Activated CD4-positive, alpha-beta memory T cell treated with anti-CD3 and anti-CD28 coated beads for 36 hours (primary cell): ENCODE measurements at regions of chr1 and their contacts with region 1.

Region 1: GRCh38 chr1:209627732-209628196 is 24.5 kb downstream of the LAMB3 start:
- DNase-seq: peak; percentile 88
- H3K4me3 Mint-ChIP-seq: no peak overlapping the region
- H3K27ac Mint-ChIP-seq: no peak overlapping the region
- H3K4me1 Mint-ChIP-seq: peaks cover 14% of the 10 kb centered on the region
- H3K27me3 Mint-ChIP-seq: no peaks in the 10 kb centered on the region

Region 2: DNA sequence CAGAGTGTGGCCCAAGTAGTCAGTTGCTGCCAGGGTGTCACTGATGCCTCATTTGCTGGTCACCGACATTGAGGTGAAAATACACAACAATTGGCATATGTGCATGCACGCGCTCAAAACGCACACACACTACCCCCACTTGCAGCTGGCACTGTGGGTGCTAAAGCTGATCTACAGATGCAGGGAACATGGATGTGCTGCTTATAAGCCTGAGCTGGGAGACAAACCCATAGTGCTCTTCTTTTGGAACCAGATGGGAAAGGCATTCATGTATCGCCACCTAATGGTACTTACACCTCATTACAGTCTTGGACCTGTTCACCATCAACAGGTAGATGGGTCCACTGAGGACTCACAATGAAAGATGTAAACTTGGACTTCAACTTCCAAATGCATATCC is 114.5 kb before region 1 on chr1:
- CTCF ChIA-PET with region 1: no interaction called
- POLR2A ChIA-PET with region 1: no interaction called
- intact Hi-C with region 1: no loop called
- DNase-seq: no peak
- H3K4me3 Mint-ChIP-seq: no peak overlapping the region
- H3K27ac Mint-ChIP-seq: no peak overlapping the region
- H3K4me1 Mint-ChIP-seq: no peaks in the 10 kb centered on the region
- H3K27me3 Mint-ChIP-seq: peaks cover 8% of the 10 kb centered on the region

Region 3: DNA sequence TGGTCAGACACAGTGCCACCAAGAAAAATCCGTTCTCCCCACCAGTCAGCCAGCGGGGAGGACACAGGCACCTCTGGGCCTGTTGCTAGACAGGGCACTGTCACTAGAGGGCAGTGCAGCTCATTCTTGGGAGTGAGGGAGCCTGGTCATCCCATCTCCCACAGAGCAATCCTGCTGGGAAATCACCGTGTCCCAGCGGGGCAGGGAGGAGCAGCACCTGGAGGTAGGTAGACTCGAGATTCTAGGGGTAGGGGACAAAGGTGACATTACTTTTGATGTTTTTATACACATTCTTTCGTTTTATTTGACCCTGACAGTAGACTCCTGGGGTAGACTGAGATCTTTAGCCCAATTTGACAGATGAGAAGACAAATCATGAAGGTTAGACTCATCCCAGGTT is 51.0 kb before region 1 on chr1:
- CTCF ChIA-PET with region 1: interaction called, 18 read pairs
- POLR2A ChIA-PET with region 1: no interaction called
- intact Hi-C with region 1: loop called (anchors 1 kb)
- DNase-seq: peak; percentile 82
- H3K4me3 Mint-ChIP-seq: no peak overlapping the region
- H3K27ac Mint-ChIP-seq: no peak overlapping the region
- H3K4me1 Mint-ChIP-seq: no peaks in the 10 kb centered on the region
- H3K27me3 Mint-ChIP-seq: peaks cover 2% of the 10 kb centered on the region

Region 4: DNA sequence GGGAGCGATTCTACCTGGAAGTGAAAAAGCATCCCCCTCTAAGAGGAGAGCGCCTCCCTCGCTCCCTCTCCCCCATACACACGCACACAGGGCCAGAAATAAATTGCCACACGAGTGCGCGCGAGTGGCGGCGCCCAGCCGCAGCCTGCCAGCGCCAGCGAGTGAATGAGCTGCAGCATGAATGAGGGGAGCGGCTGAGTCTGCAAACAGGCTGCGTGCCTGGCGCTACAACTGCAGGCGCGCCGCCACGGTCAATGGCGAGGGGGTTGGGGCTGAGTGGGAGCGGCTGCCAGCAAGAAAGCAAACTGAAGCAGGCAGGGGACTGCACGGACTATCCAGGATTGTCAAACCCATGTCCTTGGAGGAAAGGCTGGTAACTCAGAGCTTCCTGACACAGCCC is 42.1 kb before region 1 on chr1:
- CTCF ChIA-PET with region 1: interaction called, 5 read pairs
- POLR2A ChIA-PET with region 1: no interaction called
- intact Hi-C with region 1: loop called (anchors 5 kb)
- DNase-seq: no peak
- H3K4me3 Mint-ChIP-seq: no peak overlapping the region
- H3K27ac Mint-ChIP-seq: no peak overlapping the region
- H3K4me1 Mint-ChIP-seq: peaks cover 3% of the 10 kb centered on the region
- H3K27me3 Mint-ChIP-seq: peaks cover 8% of the 10 kb centered on the region

Region 5: DNA sequence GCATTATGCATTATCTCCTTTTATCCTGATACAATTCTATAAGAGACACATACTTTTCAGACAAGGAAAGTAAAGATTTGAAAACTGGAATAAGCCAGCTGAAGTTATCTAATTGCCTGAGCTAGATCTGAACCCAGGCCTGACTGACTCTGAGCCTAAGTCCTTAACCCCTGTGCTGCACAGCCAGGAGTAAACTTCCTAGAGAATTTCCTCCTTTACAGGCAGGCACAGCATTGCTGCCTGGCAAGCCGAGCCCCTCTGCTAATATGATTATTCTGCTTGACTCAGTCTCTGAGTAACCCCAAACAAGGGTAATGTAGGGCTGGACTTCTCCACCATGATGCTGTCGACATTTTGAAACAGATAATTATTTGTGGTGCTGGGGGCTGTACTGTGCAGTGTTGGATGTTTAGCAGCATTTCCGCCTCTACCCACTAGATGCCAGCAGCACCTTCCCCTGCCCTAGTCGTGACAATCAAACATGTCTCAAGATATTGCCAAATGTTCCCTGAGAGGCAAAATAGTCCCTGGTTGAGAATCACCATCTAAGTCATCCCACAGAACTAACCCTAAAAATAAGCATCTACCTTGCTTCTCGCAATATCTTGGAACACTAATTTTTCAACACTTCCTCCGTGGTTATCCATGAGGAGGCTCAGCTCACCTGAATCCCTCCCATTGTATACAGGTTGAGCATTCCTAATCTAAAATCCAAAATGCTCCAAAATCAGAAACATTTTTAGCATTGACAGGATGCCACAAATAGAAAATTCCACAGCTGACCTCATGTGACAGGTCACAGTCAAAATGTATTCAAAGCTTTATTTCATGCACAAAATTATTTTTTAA is 25.7 kb before region 1 on chr1:
- CTCF ChIA-PET with region 1: interaction called, 19 read pairs
- POLR2A ChIA-PET with region 1: no interaction called
- intact Hi-C with region 1: loop called (anchors 2 kb)
- DNase-seq: peak; percentile 67
- H3K4me3 Mint-ChIP-seq: no peak overlapping the region
- H3K27ac Mint-ChIP-seq: no peak overlapping the region
- H3K4me1 Mint-ChIP-seq: peaks cover 3% of the 10 kb centered on the region
- H3K27me3 Mint-ChIP-seq: peaks cover 3% of the 10 kb centered on the region

Region 6: GRCh38 chr1:209607102-209607794 is 20.5 kb before region 1 on chr1:
- CTCF ChIA-PET with region 1: interaction called, 19 read pairs
- POLR2A ChIA-PET with region 1: no interaction called
- intact Hi-C with region 1: loop called (anchors 2 kb)
- DNase-seq: peak; percentile 73
- H3K4me3 Mint-ChIP-seq: no peak overlapping the region
- H3K27ac Mint-ChIP-seq: no peak overlapping the region
- H3K4me1 Mint-ChIP-seq: peaks cover 3% of the 10 kb centered on the region
- H3K27me3 Mint-ChIP-seq: no peaks in the 10 kb centered on the region

Region 7: GRCh38 chr1:209643285-209644020 is 15.7 kb after region 1 on chr1:
- CTCF ChIA-PET with region 1: interaction called, 13 read pairs
- POLR2A ChIA-PET with region 1: no interaction called
- intact Hi-C with region 1: no loop called
- DNase-seq: no peak
- H3K4me3 Mint-ChIP-seq: no peak overlapping the region
- H3K27ac Mint-ChIP-seq: no peak overlapping the region
- H3K4me1 Mint-ChIP-seq: peaks cover 8% of the 10 kb centered on the region
- H3K27me3 Mint-ChIP-seq: no peaks in the 10 kb centered on the region

Region 8: DNA sequence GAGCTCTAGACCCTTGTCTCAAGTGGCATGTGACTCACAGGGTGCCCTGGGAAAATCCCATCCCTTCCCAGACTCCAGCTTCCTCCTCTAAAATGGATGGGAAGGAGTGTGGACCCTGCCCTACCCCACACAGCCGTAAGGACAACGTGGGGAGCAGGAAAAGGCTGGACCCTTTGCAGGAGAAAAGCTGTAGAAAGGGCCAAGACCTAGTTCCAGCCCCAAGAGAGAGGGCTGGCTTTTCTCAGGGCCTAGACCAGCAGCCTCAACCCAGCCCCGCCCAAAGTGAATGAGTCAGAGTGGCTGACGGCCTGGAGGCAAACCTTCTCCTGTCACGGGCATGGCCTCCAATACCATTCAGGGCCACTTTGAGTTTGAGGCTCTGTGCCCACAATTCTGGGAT is 23.4 kb after region 1 on chr1:
- CTCF ChIA-PET with region 1: interaction called, 13 read pairs
- POLR2A ChIA-PET with region 1: no interaction called
- intact Hi-C with region 1: loop called (anchors 2 kb)
- DNase-seq: peak; percentile 90
- H3K4me3 Mint-ChIP-seq: no peak overlapping the region
- H3K27ac Mint-ChIP-seq: peak overlapping the region; percentile 59
- H3K4me1 Mint-ChIP-seq: peaks cover 57% of the 10 kb centered on the region
- H3K27me3 Mint-ChIP-seq: no peaks in the 10 kb centered on the region